Heart right ventricle (tissue), 16 donors: ENCODE measurements at regions of chr17 and their contacts with region 1.

Region 1: DNA sequence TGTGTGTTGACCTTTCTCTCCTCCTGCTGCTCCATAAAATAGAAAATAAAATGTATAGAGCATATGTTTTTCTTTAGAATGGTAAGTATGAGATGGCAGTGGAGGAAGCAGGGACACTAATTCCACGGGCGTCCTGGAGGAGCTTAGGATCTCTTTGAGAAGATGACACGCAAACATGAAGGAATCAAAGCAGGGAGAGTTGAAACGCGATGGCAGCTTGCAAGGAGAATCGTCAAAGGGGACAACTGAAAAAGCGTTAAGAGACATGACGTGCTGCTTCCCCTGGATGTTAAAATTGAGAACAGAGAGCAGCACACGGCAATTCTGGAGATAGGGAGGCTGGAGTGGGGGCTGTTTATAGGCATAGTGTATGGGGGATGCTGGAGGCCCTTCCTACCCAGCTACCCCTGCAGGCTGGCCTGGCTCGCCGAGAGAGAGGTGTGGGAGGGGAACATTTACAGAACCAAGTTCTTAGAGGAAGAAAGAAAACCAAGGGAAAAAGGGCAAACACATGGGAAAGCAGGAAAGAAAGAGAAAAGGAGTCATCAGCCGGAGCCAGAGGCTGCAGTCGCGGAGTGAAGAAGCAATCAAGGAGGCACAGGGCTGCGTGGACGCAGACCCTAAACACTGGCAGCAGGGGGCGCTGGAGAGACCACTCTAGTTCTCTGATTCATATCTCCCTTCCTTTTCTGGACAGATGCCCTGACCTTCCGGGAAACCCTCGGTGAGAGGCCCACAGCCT is 55.8 kb downstream of the MYH13 start:
- DNase-seq: peak; percentile 46 to 47
- ATAC-seq: peak in 7 of 8 donors; percentile 39 to 57 (median 51)
- H3K4me3 ChIP-seq: no peak overlapping the region
- H3K27ac ChIP-seq: no peak overlapping the region
- H3K4me1 ChIP-seq: peaks cover 0 to 9% (median 0%) of the 10 kb centered on the region in 9 donors
- H3K27me3 ChIP-seq: peaks cover 0 to 18% (median 2%) of the 10 kb centered on the region in 7 donors
- CTCF ChIP-seq: peak in 8 of 9 donors; percentile 15 to 72 (median 64)

Region 2: GRCh38 chr17:9924735-9925191 is 392.2 kb before region 1 on chr17:
- intact Hi-C with region 1: loop called in 1 of 10 experiments (anchors 10 kb)
- DNase-seq: no peak
- ATAC-seq: peak in 6 of 8 donors; percentile 39 to 70 (median 59)
- H3K4me3 ChIP-seq: no peak overlapping the region
- H3K27ac ChIP-seq: no peak overlapping the region
- H3K4me1 ChIP-seq: peaks cover 0 to 4% (median 0%) of the 10 kb centered on the region in 9 donors
- H3K27me3 ChIP-seq: no peaks in the 10 kb centered on the region
- CTCF ChIP-seq: peak; percentile 75 to 86 (median 83)

Region 3: DNA sequence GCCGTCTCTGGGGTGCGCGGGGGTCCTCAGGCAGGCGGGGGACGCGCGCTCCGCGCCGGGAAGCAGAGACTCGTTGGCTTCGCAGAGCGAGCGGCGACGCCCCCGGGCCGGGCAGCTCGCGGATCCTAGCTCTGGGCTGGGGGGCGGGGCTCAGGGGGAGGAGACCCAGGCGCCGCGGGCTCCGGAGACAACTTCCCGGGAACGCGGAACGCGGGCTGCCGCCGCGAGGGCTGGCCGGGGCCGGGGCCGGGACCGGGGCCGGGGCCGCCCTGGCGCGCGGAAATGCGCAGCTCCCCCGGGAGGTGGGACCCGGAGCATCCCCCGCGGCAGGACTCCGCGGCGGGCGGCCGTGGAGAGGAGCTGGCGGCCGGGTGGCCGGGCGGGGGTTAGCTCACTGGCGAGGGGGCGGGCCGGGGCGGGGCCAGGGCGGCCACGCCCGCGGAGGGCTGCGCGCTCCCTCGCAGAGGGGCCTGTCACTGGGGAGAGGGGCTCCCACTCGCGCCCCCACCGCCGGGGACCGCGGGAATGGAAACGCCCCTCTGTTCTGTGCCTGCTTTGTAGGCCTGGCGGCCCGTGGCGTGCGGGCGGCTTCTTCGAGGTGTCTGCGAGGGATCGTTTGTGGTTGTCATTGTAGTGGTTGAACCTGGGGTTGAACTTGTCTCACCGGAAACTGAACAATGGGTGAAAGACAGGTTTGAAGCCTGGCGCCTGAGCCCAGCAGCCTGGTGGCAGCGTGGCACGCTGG is 118.3 kb before region 1 on chr17 and contains the start of gene GAS7:
- intact Hi-C with region 1: no loop called
- DNase-seq: peak; percentile 74
- ATAC-seq: peak in 7 of 8 donors; percentile 62 to 91 (median 71)
- H3K4me3 ChIP-seq: peak within 1 kb of the TSS; percentile 62 to 78 (median 72)
- H3K27ac ChIP-seq: peak within 1 kb of the TSS in 8 of 10 donors; percentile 24 to 88 (median 80)
- H3K4me1 ChIP-seq: peaks cover 0 to 29% (median 11%) of the 10 kb centered on the region in 9 donors
- H3K27me3 ChIP-seq: peaks cover 0 to 26% (median 12%) of the 10 kb centered on the region in 7 donors
- CTCF ChIP-seq: no peak
- total RNA-seq, gene GAS7: 39.6 to 111 (median 67.7) TPM

Region 4: DNA sequence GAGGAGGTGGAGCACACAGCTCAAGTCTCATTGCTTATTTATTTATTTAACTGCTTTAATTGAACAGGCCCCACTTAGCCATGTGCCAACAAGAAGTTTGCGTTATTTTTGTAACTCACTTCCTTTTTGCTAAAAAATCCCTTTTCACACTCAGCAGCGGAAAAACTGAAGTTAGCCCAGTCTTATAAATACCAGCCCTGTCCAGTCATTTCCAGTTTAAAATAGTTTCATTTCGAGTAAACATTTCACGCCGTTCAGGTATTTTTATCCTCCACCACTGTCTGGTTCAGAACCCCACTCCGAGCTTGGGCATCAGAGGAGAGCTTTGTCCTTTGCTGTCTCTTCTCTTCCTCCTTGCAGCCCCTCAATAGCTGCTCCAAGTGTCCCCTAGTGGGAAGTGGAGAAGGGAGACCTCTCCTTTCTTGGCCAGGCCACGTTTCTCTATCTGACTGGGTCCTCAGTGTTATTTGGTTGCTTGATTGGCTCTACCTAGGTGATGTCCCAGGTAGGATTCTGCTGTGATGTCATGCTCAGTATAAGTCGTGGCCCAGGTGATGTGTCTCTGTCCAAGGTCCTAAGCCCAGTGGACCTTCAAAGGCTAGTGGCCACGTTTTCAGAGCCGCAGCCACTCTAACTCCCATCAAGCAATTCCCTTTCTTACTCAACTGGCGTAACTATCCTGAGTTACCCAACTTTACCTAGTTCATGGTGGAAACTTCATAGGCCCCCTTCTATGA is 65.6 kb before region 1 on chr17:
- intact Hi-C with region 1: loop called in 1 of 10 experiments (anchors 10 kb)
- DNase-seq: no peak
- ATAC-seq: no peak
- H3K4me3 ChIP-seq: no peak overlapping the region
- H3K27ac ChIP-seq: no peak overlapping the region
- H3K4me1 ChIP-seq: peaks cover 0 to 4% (median 0%) of the 10 kb centered on the region in 9 donors
- H3K27me3 ChIP-seq: peaks cover 0 to 6% (median 0%) of the 10 kb centered on the region in 7 donors
- CTCF ChIP-seq: no peak